ENCODE measurements at regions of chr7 and their contacts with region 1.

Region 1: DNA sequence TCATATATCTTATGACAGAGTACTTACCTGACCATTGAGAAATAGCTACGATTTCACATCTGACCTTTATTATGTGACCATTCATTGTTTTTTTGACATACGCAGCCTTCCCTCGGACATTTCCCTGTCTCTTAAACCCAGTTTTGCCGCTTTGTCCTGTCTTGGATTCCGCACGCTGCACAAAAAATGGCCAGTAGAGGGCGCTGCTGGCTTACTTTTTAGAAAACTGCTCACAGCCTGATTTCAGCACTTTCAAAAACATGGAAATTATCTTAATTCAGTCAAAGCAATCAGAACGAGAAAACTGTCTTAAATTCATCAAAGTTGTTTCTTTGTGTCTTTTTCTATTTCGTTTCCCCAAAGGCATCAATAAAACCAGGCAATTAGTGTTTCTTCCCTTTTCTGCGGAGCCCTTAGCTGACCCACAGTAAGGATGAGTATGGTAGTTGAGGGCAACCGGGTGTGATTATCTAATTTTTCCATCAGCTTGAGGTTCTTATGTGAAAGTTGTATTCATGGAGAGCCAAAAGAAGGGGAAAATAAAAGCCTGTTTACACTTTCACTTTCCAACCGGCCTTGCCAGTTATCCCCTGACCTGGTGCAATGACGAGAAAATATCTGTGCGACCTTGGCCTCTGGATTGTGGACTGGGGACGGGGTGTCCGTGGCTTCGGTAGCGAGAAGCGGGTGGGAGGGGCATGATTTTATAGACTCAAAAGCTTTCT is 144.4 kb downstream of the DYNC1I1 start:
- DNase-seq: peak; percentile 26 to 66 (median 49)
- ATAC-seq: peak; percentile 72
- H3K4me3 ChIP-seq: no peak overlapping the region
- H3K4me3 Mint-ChIP-seq: peak overlapping the region in 1 of 10 donors; percentile 51
- H3K27ac ChIP-seq: no peak overlapping the region
- H3K27ac Mint-ChIP-seq: no peak overlapping the region
- H3K4me1 ChIP-seq: no peaks in the 10 kb centered on the region
- H3K4me1 Mint-ChIP-seq: peaks cover 0 to 8% (median 0%) of the 10 kb centered on the region in 7 donors
- H3K27me3 ChIP-seq: no peaks in the 10 kb centered on the region
- H3K27me3 Mint-ChIP-seq: peaks cover 19 to 41% (median 34%) of the 10 kb centered on the region in 5 donors

Region 2: GRCh38 chr7:95893484-95893883 is 23.3 kb before region 1 on chr7:
- CTCF ChIA-PET with region 1: no interaction called
- POLR2A ChIA-PET with region 1: no interaction called
- intact Hi-C with region 1: no loop called
- DNase-seq: no peak
- ATAC-seq: no peak
- H3K4me3 ChIP-seq: no peak overlapping the region
- H3K4me3 Mint-ChIP-seq: no peak overlapping the region
- H3K27ac ChIP-seq: no peak overlapping the region
- H3K27ac Mint-ChIP-seq: no peak overlapping the region
- H3K4me1 ChIP-seq: no peaks in the 10 kb centered on the region
- H3K4me1 Mint-ChIP-seq: no peaks in the 10 kb centered on the region
- H3K27me3 ChIP-seq: peaks cover 0 to 2% of the 10 kb centered on the region in 2 donors
- H3K27me3 Mint-ChIP-seq: peaks cover 4 to 27% (median 17%) of the 10 kb centered on the region in 5 donors

Region 3: DNA sequence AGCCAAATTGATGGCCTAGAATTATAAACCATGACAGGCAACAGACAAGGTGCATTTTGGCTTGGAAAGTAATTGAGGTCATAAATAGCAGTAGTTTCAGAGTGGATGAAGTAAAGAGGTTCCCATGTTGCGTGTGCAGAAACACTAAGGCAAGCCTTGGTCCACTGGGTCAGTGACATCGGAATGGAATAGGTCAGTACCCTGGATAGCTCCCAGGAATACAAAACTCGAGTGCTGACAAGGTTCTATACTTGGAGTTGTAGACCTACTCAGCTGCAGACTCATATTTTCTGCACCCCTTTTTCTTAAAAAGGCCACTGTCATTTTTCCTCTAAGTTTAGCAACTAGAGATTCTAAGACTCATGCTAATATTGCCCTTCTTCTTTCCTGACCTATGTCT is 11.6 kb before region 1 on chr7:
- CTCF ChIA-PET with region 1: interaction called, 14 read pairs
- POLR2A ChIA-PET with region 1: no interaction called
- intact Hi-C with region 1: no loop called
- DNase-seq: no peak
- ATAC-seq: no peak
- H3K4me3 ChIP-seq: no peak overlapping the region
- H3K4me3 Mint-ChIP-seq: no peak overlapping the region
- H3K27ac ChIP-seq: no peak overlapping the region
- H3K27ac Mint-ChIP-seq: no peak overlapping the region
- H3K4me1 ChIP-seq: no peaks in the 10 kb centered on the region
- H3K4me1 Mint-ChIP-seq: no peaks in the 10 kb centered on the region
- H3K27me3 ChIP-seq: no peaks in the 10 kb centered on the region
- H3K27me3 Mint-ChIP-seq: peaks cover 4 to 35% (median 7%) of the 10 kb centered on the region in 5 donors

Region 4: DNA sequence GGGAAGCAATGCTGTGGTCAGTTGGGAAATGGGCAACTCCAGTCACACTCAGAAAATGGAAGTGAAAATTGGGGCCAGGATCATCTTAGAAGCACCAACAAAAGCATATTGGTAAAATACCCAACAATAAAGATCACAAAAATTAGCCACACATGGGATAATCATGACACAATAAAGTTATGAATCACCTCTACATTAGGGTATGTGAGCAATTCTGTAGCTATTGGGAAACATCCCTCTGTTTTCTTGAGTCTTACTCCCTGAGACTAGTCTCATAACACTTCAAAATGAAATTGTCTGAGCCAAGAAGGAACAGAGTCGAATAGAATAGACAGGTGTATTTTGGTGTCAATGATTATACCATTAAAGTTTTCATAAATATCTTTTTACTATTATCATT is 34.0 kb after region 1 on chr7:
- CTCF ChIA-PET with region 1: no interaction called
- POLR2A ChIA-PET with region 1: no interaction called
- intact Hi-C with region 1: no loop called
- DNase-seq: no peak
- ATAC-seq: no peak
- H3K4me3 ChIP-seq: no peak overlapping the region
- H3K4me3 Mint-ChIP-seq: no peak overlapping the region
- H3K27ac ChIP-seq: no peak overlapping the region
- H3K27ac Mint-ChIP-seq: no peak overlapping the region
- H3K4me1 ChIP-seq: no peaks in the 10 kb centered on the region
- H3K4me1 Mint-ChIP-seq: no peaks in the 10 kb centered on the region
- H3K27me3 ChIP-seq: no peaks in the 10 kb centered on the region
- H3K27me3 Mint-ChIP-seq: peaks cover 0 to 23% (median 4%) of the 10 kb centered on the region in 5 donors

Region 5: DNA sequence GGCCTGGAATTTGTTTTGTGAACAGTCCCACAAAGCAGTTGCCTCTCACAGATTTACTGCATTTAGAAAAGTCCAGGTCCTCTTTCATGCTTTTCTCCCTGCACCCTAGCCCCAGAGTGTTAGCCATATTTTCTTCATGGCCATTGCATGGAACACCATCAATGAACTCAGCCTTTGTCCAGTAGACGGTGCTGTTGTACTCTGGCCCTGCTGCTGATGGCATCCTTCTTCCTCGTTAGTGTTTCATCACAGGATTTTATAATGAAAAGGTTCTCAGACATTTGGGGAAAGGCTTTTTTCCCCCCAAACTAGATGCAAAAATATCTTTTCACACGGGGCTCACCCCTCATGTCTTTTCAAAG is 498.2 kb after region 1 on chr7:
- CTCF ChIA-PET with region 1: no interaction called
- POLR2A ChIA-PET with region 1: no interaction called
- intact Hi-C with region 1: loop called in 1 of 2 experiments (anchors 5 kb)
- DNase-seq: peak in 6 of 9 donors; percentile 13 to 40 (median 24)
- ATAC-seq: peak; percentile 67
- H3K4me3 ChIP-seq: no peak overlapping the region
- H3K4me3 Mint-ChIP-seq: no peak overlapping the region
- H3K27ac ChIP-seq: no peak overlapping the region
- H3K27ac Mint-ChIP-seq: no peak overlapping the region
- H3K4me1 ChIP-seq: no peaks in the 10 kb centered on the region
- H3K4me1 Mint-ChIP-seq: peaks cover 0 to 7% (median 0%) of the 10 kb centered on the region in 7 donors
- H3K27me3 ChIP-seq: no peaks in the 10 kb centered on the region
- H3K27me3 Mint-ChIP-seq: peaks cover 5 to 24% (median 18%) of the 10 kb centered on the region in 5 donors

Region 6: DNA sequence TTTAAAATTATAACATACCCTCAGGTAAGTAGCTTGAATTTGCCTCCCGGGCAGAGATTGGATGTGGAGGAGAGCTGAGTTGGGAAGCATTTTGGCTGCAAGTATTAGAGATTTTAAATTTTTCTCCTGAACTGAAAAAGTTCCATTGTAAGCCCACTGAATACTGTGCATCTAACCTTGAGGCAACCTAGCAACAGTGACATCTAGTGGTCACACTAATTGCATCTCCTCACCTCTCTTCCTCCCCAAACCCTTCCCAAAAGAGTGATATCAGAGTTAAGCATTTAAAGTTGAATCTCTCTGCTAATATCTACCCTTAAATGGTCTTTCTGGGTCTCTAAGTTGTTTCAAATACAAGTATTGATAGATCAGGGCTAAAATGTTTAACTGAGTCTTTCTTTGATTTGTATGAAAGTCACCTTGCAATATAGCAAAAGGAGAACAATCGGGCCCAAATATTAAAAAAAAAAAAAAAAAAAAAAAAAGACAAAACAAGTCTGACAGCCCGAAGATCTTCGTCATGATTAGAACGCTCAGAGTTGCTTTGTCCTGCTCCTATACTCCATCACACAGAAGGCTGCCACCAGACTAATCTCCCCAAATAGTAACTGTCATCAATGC is 1148.3 kb after region 1 on chr7:
- CTCF ChIA-PET with region 1: interaction called, 3 read pairs
- POLR2A ChIA-PET with region 1: interaction called, 3 read pairs
- intact Hi-C with region 1: loop called (anchors 1 kb)
- DNase-seq: peak in 5 of 9 donors; percentile 8 to 44 (median 35)
- ATAC-seq: peak; percentile 77
- H3K4me3 ChIP-seq: no peak overlapping the region
- H3K4me3 Mint-ChIP-seq: no peak overlapping the region
- H3K27ac ChIP-seq: no peak overlapping the region
- H3K27ac Mint-ChIP-seq: no peak overlapping the region
- H3K4me1 ChIP-seq: no peaks in the 10 kb centered on the region
- H3K4me1 Mint-ChIP-seq: no peaks in the 10 kb centered on the region
- H3K27me3 ChIP-seq: no peaks in the 10 kb centered on the region
- H3K27me3 Mint-ChIP-seq: peaks cover 2 to 12% (median 7%) of the 10 kb centered on the region in 5 donors

Region 7: GRCh38 chr7:97179454-97180104 is 1262.8 kb after region 1 on chr7:
- CTCF ChIA-PET with region 1: interaction called, 3 read pairs
- POLR2A ChIA-PET with region 1: no interaction called
- intact Hi-C with region 1: loop called (anchors 1 to 2 kb)
- DNase-seq: peak in 7 of 9 donors; percentile 18 to 63 (median 53)
- ATAC-seq: peak; percentile 88
- H3K4me3 ChIP-seq: no peak overlapping the region
- H3K4me3 Mint-ChIP-seq: no peak overlapping the region
- H3K27ac ChIP-seq: no peak overlapping the region
- H3K27ac Mint-ChIP-seq: no peak overlapping the region
- H3K4me1 ChIP-seq: no peaks in the 10 kb centered on the region
- H3K4me1 Mint-ChIP-seq: peaks cover 0 to 4% (median 0%) of the 10 kb centered on the region in 7 donors
- H3K27me3 ChIP-seq: no peaks in the 10 kb centered on the region
- H3K27me3 Mint-ChIP-seq: no peaks in the 10 kb centered on the region

Region 8: GRCh38 chr7:97835296-97836138 is 1918.8 kb after region 1 on chr7:
- CTCF ChIA-PET with region 1: no interaction called
- POLR2A ChIA-PET with region 1: no interaction called
- intact Hi-C with region 1: loop called (anchors 1 to 2 kb)
- DNase-seq: peak; percentile 8 to 53 (median 37)
- ATAC-seq: peak; percentile 69
- H3K4me3 ChIP-seq: no peak overlapping the region
- H3K4me3 Mint-ChIP-seq: no peak overlapping the region
- H3K27ac ChIP-seq: no peak overlapping the region
- H3K27ac Mint-ChIP-seq: no peak overlapping the region
- H3K4me1 ChIP-seq: no peaks in the 10 kb centered on the region
- H3K4me1 Mint-ChIP-seq: peaks cover 0 to 2% (median 0%) of the 10 kb centered on the region in 7 donors
- H3K27me3 ChIP-seq: no peaks in the 10 kb centered on the region
- H3K27me3 Mint-ChIP-seq: peaks cover 24 to 41% (median 37%) of the 10 kb centered on the region in 5 donors